ENCODE measurements at regions of chr2 and their contacts with region 1.

Region 1: DNA sequence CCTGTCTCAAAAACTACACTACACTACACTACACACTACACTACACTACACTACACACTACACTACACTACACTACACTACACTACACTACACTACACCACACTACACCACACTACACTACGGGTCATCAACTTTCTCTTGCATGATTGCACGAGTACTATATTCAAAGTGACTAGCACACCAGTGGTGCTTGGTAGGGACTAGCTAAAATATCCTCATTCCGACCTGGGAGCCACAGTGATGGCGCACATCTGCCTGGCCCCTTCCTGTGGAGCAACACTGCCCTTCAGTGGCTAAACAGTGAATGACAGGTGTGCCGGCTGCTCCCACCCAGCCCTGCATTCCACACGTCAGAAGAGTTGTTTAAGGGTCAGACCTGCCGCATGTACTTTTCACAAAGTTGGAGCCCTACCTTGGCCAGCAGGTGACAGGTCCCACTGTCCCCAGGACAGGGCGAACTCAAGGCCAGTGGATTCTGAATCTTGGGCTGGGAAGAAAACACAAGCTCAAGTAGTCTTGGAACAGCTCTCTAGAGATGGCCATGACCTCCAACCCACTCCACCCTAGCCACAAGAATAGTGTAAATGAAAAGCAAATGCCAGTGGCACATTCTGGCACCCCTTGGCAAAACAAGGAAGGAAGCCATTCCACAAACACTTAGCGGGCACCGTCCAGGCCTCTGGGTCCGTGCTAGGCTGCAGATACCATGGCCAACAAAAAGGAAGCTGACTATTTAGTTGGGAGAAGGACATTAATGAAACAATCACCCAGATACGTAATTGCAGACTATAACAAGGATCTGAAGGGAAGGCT is 79.7 kb upstream of the MSH2 start:
- DNase-seq: peak; percentile 83

Region 2: GRCh38 chr2:47016172-47016913 is 306.9 kb before region 1 on chr2:
- in situ Hi-C with region 1: loop called (anchors 25 kb)
- DNase-seq: peak; percentile 41

Region 3: GRCh38 chr2:47664817-47665216 is 341.6 kb after region 1 on chr2:
- in situ Hi-C with region 1: no loop called
- DNase-seq: peak; percentile 44